Gastrocnemius medialis (tissue), 4 donors: ENCODE measurements at regions of chr13 and their contacts with region 1.

Region 1: DNA sequence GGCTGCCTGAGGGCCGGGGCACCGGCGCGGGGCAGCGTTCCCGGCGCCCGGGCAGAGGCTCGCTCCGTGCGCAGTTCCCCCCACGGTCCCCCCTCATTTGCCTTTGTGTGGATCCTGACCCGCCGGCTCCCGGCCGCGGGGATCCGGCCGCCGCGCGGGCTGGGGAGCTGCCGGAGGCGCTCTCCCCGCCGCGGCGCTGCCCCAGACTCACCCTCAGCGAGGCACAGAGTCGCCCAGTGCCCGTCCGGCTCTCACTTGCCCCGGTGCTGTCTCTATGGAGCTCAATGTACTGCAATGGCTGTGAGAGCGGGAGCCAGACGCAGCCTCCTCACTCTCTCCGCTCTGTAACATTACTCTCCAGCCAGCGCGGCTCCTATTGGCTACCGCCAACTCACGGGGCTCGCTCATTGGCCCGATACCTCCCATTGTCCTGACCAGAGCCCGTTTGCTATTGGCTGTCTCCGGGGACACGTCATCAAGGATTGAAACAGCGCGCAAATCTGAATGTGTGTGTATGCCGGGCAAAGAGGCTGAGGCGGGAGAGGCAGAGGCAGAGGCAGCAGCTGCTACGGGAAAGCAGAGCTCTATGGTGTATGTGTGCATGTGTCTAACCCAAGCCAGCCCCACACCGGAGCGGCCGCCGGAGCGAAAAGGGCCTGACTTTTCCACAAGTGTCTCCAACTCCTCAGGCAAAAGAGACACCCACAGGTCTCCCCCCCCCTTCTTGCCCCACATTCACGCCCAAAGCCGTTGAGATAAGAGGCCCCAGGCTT is at the start of gene HMGB1:
- DNase-seq: peak; percentile 99
- ATAC-seq: peak; percentile 90 to 94
- H3K4me3 ChIP-seq: peak within 1 kb of the TSS; percentile 60 to 74 (median 68)
- H3K27ac ChIP-seq: peak within 1 kb of the TSS; percentile 92 to 98 (median 96)
- H3K4me1 ChIP-seq: peaks cover 29 to 30% of the 10 kb centered on the region in 2 donors
- H3K27me3 ChIP-seq: no peaks in the 10 kb centered on the region
- CTCF ChIP-seq: peak in 2 of 5 experiments; percentile 17 to 18
- POLR2A ChIP-seq: peak; percentile 97 to 98
- total RNA-seq, gene HMGB1: 217 to 314 (median 265) TPM

Region 2: GRCh38 chr13:30132623-30133553 is 332.9 kb before region 1 on chr13:
- in situ Hi-C with region 1: loop called in 2 of 4 experiments (anchors 10 to 25 kb)
- intact Hi-C with region 1: loop called (anchors 5 kb)
- DNase-seq: peak; percentile 83 to 89
- ATAC-seq: peak; percentile 90 to 99
- H3K4me3 ChIP-seq: no peak overlapping the region
- H3K27ac ChIP-seq: no peak overlapping the region
- H3K4me1 ChIP-seq: no peaks in the 10 kb centered on the region
- H3K27me3 ChIP-seq: no peaks in the 10 kb centered on the region
- CTCF ChIP-seq: peak; percentile 84 to 90 (median 90)
- POLR2A ChIP-seq: no peak

Region 3: DNA sequence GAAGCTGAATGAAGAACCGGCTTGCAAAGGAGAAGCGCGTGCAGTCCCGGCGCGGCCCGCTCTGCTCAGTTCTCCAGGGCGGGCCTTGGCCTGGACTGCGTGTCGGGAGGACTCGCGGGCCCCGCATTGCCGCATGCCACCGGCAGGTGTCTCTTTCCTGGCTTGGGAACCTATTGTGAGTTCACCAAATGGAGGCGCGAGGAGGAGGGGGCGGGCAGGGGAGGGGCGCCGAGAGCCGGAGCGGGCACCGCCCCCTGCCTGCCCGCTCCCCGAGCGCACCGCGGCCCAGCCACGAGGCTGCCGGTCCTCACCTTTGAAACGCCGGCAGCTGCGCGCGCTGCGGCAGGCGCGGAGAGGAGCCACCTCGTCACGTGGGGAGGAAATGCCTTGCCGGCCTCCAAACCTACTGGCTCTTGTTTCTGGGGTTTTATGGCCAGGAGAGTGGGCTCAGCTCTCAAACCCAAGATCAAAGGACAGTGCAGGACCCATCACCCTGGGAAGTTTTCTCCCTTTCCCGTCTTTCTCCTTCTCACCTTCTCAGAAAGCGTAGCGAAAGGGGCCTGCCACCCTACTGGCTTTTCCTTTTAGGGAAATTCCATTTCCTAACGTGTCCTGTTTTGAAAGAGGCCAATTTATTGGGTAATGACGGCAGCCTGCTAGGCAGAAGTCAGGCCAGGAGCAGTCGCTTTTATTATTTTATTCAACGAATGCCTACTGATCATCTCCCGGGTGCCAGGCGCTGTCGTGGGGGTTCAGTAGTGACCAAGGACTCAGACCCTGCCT is 57.3 kb before region 1 on chr13:
- in situ Hi-C with region 1: loop called in 1 of 4 experiments (anchors 10 kb)
- intact Hi-C with region 1: loop called (anchors 1 kb)
- DNase-seq: peak; percentile 91 to 95
- ATAC-seq: peak; percentile 93 to 96
- H3K4me3 ChIP-seq: peak overlapping the region; percentile 48 to 59 (median 52)
- H3K27ac ChIP-seq: peak overlapping the region; percentile 84 to 91 (median 88)
- H3K4me1 ChIP-seq: peaks cover 5 to 15% of the 10 kb centered on the region in 2 donors
- H3K27me3 ChIP-seq: no peaks in the 10 kb centered on the region
- CTCF ChIP-seq: peak; percentile 73 to 94 (median 86)
- POLR2A ChIP-seq: peak in 1 of 2 donors; percentile 12

Region 4: GRCh38 chr13:30443957-30444404 is 21.8 kb before region 1 on chr13:
- in situ Hi-C with region 1: no loop called
- intact Hi-C with region 1: loop called (anchors 1 kb)
- DNase-seq: no peak
- ATAC-seq: no peak
- H3K4me3 ChIP-seq: no peak overlapping the region
- H3K27ac ChIP-seq: no peak overlapping the region
- H3K4me1 ChIP-seq: peaks cover 12 to 15% of the 10 kb centered on the region in 2 donors
- H3K27me3 ChIP-seq: no peaks in the 10 kb centered on the region
- CTCF ChIP-seq: no peak
- POLR2A ChIP-seq: no peak

Region 5: GRCh38 chr13:30673669-30674521 is 208.1 kb after region 1 on chr13:
- in situ Hi-C with region 1: no loop called
- intact Hi-C with region 1: loop called (anchors 5 kb)
- DNase-seq: peak; percentile 61 to 83
- ATAC-seq: peak; percentile 79 to 86
- H3K4me3 ChIP-seq: peak overlapping the region; percentile 53 to 63 (median 56)
- H3K27ac ChIP-seq: peak overlapping the region; percentile 72 to 79 (median 74)
- H3K4me1 ChIP-seq: peaks cover 4 to 5% of the 10 kb centered on the region in 2 donors
- H3K27me3 ChIP-seq: no peaks in the 10 kb centered on the region
- CTCF ChIP-seq: peak; percentile 62 to 80 (median 70)
- POLR2A ChIP-seq: no peak

Region 6: GRCh38 chr13:31161828-31162590 is 696.2 kb after region 1 on chr13 and contains the start of gene HSPH1:
- in situ Hi-C with region 1: no loop called
- intact Hi-C with region 1: loop called (anchors 2 kb)
- DNase-seq: peak; percentile 97 to 98
- ATAC-seq: peak; percentile 95 to 96
- H3K4me3 ChIP-seq: peak within 1 kb of the TSS; percentile 82 to 95 (median 93)
- H3K27ac ChIP-seq: peak within 1 kb of the TSS; percentile 84 to 98 (median 96)
- H3K4me1 ChIP-seq: peaks cover 31 to 42% of the 10 kb centered on the region in 2 donors
- H3K27me3 ChIP-seq: no peaks in the 10 kb centered on the region
- CTCF ChIP-seq: peak in 1 of 5 experiments; percentile 28
- POLR2A ChIP-seq: peak; percentile 74 to 93
- total RNA-seq, gene HSPH1: 23.0 to 57.7 (median 30.6) TPM